A673 (cell line): ENCODE measurements at regions of chr6 and their contacts with region 1.

Region 1: DNA sequence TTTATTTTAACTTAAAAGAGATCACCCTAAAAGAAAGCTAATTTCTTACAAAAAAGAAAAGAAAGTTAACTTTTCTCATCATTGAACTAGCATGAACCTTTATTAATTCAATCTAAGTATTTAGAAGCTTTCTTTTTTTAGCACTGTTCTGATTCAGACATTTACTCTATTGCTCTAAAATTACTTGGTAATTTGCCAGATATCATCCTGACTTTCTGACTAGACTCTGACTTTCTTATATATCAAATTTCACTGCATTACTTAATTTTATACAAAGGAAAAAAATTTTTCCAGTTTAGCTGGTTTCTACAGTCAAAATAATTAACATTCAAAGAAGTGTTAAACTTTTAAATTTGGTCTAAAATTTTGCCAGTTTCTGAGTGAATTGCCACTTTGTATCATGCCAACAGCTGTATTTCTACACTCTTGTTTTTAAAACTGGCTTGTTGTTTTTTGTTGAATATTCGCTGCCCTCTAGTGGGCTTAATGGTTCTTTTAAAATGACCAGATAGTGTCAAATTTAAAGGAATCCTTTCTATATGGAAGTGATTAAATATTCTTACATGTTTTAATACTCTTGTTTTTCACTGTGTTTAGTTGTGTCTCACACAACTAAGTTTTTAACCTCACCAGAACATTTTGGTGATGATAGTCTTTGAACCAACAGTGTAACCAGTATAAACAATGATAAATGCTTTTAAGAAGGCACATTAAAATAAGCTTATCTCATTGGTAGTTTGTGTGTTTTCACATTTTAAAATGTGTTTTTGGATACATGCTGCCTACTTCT is 102.0 kb downstream of the POPDC3 start:
- DNase-seq: peak; percentile 77
- H3K4me3 ChIP-seq: no peak overlapping the region
- H3K27ac ChIP-seq: no peak overlapping the region
- H3K4me1 ChIP-seq: peaks cover 9% of the 10 kb centered on the region
- H3K27me3 ChIP-seq: no peaks in the 10 kb centered on the region
- CTCF ChIP-seq: peak; percentile 73

Region 2: DNA sequence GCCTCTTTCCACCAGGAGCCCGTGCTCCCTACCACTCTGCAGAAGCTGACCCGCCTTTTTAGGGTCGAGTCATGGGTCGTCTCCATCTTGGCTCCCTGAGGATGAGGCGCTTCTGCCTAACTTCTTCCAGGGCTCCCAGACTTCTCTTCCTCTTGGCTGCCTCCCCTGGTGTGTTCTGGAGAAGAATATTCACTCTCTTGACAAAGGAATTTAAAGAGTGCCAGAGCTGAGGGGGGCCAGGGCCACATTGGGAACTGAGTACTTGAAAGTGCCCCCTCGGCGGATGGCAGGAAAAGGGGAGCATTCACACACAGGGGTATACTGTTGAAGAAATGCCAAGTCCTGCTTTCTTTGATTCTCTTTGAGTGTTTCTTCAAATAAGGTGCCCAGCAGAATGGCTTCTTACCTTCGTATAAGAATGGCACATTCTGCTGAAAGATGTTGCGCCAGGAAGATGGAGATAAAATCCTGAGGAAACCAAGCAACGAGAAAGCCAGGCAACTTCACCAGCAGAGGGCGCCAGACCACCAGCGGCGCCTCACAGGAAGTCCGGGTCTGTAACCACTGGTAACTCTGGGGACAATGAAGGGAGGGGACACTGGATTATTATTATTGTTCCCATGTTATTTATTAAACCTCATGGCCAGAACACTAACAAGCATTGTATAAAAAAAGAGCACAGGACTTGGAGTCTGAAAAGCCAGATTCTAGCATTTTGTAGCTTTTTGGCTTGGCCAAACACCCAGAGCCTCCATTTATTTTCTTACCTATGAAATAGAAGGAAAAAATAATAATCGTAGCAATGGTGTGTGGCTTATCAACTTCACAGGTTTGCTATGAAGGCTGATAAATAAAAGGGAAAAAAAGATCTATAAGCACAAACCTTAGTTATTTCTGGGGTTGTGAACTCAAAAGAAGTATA is 394.8 kb before region 1 on chr6:
- CTCF ChIA-PET with region 1: no interaction called
- POLR2A ChIA-PET with region 1: no interaction called
- intact Hi-C with region 1: loop called (anchors 5 kb)
- DNase-seq: peak; percentile 82
- H3K4me3 ChIP-seq: no peak overlapping the region
- H3K27ac ChIP-seq: no peak overlapping the region
- H3K4me1 ChIP-seq: peaks cover 4% of the 10 kb centered on the region
- H3K27me3 ChIP-seq: no peaks in the 10 kb centered on the region
- CTCF ChIP-seq: peak; percentile 97

Region 3: DNA sequence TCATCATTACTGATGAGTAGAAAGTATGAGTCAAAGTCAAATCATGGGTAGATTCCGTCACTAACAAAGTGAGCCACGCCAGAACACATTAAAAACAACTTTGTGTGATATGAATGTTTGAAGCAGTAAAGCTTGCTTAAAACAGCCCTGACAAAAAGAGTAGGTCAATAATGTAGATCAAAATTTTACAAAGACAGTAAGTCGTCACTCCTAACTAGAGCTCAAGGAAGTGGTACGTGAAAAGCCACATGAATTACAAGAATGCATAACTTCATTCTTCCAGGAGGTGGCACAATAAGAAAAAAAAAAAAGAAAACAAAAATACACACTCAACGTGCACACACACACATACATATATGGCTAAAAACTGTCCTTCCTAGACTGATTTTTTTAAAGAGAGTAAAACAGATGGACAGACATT is 288.0 kb before region 1 on chr6:
- CTCF ChIA-PET with region 1: no interaction called
- POLR2A ChIA-PET with region 1: no interaction called
- intact Hi-C with region 1: loop called (anchors 2 kb)
- DNase-seq: peak; percentile 52
- H3K4me3 ChIP-seq: no peak overlapping the region
- H3K27ac ChIP-seq: no peak overlapping the region
- H3K4me1 ChIP-seq: peaks cover 7% of the 10 kb centered on the region
- H3K27me3 ChIP-seq: no peaks in the 10 kb centered on the region
- CTCF ChIP-seq: peak; percentile 63

Region 4: DNA sequence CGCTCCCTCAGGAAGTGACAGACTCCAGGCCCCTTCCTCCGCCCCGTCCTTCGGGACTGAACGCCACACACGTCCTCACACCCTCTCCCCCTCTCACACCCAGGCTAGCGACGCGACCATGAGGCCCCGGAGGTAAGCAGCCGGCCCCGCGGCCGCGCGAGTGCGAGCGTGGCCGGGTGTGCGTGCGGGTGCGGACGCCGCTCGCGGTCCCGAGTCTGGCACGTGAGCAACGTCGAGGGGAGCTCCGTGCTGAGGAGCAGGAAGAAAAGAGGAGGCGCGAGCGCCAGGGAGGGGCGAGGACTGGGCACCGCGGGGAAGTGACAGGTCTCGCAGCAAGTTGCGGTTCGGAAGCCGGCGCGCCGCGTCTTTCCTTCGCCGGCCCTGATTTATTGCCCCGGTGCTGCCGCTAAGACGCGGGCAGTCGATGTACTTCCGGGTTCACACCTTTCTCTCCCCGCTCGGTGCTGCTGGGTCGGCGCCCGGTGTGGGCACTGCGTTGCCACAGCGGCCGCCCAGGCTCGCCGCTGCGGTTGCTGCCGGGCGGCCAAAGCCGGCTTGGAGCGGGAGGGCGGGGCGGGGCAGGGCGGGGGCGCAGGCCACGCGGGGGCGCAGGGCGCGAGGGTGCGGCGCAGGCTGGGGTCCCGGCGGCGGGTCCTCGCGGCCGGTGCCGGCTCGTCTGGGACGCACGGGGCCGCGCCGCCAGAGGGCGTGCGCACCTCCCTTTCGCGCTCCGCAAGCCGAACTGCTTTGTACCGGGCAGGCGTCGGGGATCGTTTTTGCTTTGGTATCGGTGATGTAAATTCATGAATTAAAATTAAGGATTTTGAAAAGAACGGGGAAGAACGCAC is 136.7 kb before region 1 on chr6:
- CTCF ChIA-PET with region 1: no interaction called
- POLR2A ChIA-PET with region 1: no interaction called
- intact Hi-C with region 1: loop called (anchors 2 kb)
- DNase-seq: peak; percentile 74
- H3K4me3 ChIP-seq: peak overlapping the region; percentile 52
- H3K27ac ChIP-seq: no peak overlapping the region
- H3K4me1 ChIP-seq: no peaks in the 10 kb centered on the region
- H3K27me3 ChIP-seq: no peaks in the 10 kb centered on the region
- CTCF ChIP-seq: peak; percentile 66

Region 5: GRCh38 chr6:104995989-104996617 is 81.7 kb before region 1 on chr6:
- CTCF ChIA-PET with region 1: interaction called, 3 read pairs
- POLR2A ChIA-PET with region 1: no interaction called
- intact Hi-C with region 1: loop called (anchors 1 kb)
- DNase-seq: peak; percentile 14
- H3K4me3 ChIP-seq: no peak overlapping the region
- H3K27ac ChIP-seq: no peak overlapping the region
- H3K4me1 ChIP-seq: peaks cover 6% of the 10 kb centered on the region
- H3K27me3 ChIP-seq: no peaks in the 10 kb centered on the region
- CTCF ChIP-seq: 0 out of 2 replicates have a peak, but pooled peaks have one; percentile 26